ENCODE measurements at regions of chr16 and their contacts with region 1.

Region 1: DNA sequence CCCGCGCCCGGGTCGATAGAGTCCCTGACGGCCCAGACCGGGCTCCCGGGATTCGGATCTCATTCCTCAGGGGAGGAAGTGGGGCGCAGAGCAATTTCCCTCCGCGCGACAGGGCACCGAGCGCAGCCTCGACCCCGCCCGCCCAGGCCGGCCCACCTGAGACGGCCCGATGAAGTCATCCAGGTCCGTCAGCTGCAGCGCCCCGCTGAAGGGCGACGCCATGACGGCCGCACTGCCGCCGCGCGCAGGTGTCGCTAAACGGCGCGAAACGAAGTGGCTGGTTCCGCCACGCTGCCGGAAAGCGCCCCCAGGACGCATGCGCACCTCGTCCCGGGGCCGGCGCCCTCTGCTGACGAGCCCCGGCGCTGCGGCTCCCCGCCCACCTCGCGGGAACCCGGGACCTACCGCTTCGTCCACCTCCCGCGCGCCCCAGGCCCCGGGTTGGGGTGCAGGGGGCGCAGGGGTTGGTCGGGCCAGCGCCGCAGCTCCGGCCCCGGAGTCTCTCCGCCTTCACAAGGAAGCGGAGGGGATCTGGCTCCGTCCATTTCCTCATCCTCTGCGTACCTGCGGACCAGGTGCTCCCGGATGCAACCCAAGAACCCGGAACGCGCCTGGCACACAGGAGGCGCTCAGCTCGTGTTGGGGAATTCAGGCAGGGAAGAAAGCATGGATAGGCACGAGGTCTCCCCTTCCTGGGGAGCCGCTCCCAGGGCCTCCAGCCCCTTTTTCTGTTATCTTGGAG is at the start of gene CIAO3:
- DNase-seq: peak; percentile 77 to 97 (median 85)

Region 2: GRCh38 chr16:711548-712320 is 29.2 kb before region 1 on chr16:
- intact Hi-C with region 1: loop called (anchors 2 kb)
- DNase-seq: peak in 9 of 10 donors; percentile 73 to 97 (median 85)

Region 3: DNA sequence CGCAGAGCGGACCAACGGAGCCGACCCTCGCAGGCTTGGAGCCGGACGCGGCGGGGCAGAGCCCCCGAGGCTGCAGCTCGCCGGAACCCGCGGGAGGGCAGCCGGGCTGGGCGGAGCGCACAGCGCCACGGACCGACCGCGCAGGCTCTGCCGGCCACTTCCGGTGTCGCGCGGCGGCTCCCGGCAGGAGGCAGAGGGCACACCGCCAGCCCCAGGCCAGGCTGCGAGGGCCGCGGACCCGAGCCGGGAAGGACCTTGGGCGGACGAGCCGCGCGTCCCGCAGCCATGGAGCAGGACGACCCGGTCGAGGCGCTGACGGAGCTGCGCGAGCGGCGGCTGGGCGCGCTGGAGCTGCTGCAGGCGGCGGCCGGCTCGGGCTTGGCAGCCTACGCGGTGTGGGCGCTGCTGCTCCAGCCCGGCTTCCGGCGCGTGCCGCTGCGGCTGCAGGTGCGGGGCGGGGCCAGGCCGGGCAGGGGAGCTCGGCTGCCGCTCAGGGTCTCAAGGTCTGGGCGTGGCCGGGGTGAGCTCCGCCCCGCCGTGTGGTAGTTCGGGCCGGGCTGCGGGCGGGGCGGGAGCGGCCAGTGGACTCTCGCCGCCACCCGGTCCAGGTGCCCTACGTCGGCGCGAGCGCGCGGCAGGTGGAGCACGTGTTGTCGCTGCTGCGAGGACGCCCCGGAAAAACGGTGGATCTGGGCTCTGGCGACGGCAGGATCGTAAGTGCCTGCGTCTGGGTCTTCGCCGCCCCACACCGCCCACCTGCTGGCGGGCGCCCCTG is 19.8 kb before region 1 on chr16 and contains the start of gene ANTKMT:
- intact Hi-C with region 1: loop called (anchors 2 kb)
- DNase-seq: peak in 9 of 10 donors; percentile 71 to 96 (median 73)

Region 4: DNA sequence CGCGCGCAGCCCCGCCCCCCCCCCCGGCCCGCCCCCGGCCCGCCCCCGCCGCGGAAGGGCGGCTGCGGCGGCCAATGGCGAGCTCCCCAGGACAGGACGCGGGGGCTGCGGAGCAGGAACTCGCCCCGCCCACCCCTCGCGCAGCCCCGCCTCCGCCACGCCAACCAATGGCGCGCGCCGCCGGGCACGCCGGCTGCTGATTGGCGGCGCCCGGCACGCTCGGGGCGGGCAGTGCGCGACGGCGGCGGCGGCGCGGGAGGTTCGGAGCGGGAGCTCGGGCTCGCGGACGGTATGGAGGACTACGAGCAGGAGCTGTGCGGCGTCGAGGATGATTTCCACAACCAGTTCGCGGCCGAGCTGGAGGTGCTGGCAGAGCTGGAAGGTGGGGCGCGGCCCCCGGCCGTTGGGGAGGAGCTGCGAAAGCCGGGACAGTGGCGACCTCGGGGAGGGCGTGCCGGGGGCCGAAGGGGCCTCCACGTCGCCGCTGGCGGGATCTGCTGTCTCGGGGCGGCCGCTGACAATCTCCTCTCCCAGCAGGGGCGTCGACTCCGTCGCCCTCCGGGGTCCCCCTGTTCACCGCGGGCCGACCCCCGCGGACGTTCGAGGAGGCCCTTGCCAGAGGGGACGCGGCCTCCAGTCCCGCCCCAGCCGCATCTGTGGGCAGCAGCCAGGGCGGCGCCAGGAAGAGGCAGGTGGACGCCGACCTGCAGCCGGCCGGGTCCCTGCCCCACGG is 47.6 kb after region 1 on chr16 and contains the start of gene CHTF18:
- intact Hi-C with region 1: loop called (anchors 2 kb)
- DNase-seq: peak; percentile 80 to 99 (median 88)

Region 5: DNA sequence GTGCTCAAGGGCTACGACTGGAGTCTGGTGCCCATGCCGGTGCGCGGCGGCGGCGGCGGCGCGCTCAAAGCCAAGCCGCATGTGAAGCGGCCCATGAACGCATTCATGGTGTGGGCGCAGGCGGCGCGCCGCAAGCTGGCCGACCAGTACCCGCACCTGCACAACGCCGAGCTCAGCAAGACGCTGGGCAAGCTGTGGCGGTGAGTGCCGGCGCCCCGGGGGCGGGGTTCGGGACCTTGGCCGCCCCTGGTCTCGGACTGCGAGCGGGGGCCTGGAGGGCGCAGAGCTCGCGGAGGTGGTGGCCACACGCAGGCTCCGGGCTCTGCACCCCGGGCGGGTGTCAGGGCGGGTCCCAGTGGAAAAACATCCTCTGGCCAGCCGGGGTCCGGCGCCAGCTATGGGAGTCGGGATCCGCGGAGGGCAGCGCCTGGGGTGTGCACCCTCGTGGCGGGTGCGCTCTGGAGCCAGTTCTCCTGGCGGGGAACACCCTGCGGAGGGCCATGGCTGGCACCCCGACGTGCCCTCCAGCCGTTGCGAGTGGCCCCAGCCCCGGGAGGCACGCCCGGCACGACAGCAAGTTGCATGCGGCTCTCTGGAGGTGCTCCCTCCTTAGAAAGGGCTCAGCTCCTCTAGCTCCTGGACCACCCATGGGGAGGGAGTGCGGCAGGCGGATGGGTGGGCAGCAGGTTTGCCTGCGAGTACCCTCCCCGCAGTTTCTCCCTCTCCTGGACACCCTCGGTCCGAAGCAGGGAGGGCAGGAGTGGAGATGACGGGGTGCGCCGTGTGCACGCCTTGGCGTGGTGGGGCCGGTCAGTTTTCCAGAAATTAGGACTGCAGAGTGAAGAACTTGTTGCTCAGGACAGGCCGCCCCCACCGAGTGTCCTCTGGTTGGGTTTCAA is 241.5 kb after region 1 on chr16:
- intact Hi-C with region 1: no loop called
- DNase-seq: peak in 1 of 10 donors; percentile 23